ENCODE measurements at regions of chr6 and their contacts with region 1.

Region 1: GRCh38 chr6:129598244-129599187 is 111.5 kb downstream of the ARHGAP18 start:
- DNase-seq: no peak
- H3K4me3 ChIP-seq: no peak overlapping the region
- H3K27ac ChIP-seq: no peak overlapping the region
- H3K4me1 ChIP-seq: no peaks in the 10 kb centered on the region
- H3K27me3 ChIP-seq: no peaks in the 10 kb centered on the region
- CTCF ChIP-seq: peak; percentile 81

Region 2: GRCh38 chr6:129730477-129731165 is 132.1 kb after region 1 on chr6:
- intact Hi-C with region 1: loop called (anchors 1 kb)
- DNase-seq: no peak
- H3K4me3 ChIP-seq: no peak overlapping the region
- H3K27ac ChIP-seq: no peak overlapping the region
- H3K4me1 ChIP-seq: no peaks in the 10 kb centered on the region
- H3K27me3 ChIP-seq: no peaks in the 10 kb centered on the region
- CTCF ChIP-seq: peak; percentile 54

Region 3: DNA sequence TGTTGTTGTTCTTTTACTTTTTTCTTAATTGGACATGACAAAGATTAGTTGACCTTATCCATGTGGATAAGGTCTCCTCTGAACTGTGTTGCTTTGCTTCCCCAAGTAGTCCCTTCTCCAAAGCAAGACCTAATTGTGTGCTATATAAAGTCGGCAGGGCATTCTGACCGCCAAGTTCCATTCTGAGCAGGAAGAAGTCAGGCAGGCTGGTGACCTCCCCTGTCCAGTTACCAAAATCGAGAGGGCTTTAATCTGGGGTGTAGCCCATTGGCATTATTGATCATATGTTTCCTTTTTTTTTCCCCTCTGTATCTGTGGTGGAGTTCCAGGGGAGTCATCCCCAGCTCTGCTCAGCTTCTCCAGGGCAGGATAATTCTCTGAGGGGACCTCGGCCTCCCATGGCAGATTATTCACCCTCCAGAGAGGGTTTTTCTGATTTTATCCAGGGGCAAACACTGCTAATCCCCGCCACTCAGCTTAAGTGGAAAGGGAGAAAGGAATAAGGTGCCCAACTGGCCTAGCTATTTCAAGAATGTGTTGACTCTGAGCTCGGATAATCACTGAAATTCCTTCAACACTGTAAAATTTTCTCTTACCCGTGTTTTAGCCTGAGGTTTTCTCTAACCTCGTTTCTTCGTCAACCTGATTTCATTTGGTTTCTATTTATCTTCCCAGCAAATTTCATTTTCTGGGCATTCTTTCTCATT is 348.1 kb after region 1 on chr6:
- intact Hi-C with region 1: loop called (anchors 10 kb)
- DNase-seq: no peak
- H3K4me3 ChIP-seq: no peak overlapping the region
- H3K27ac ChIP-seq: no peak overlapping the region
- H3K4me1 ChIP-seq: no peaks in the 10 kb centered on the region
- H3K27me3 ChIP-seq: no peaks in the 10 kb centered on the region
- CTCF ChIP-seq: no peak